Activated CD4-positive, alpha-beta T cell treated with anti-CD3 and anti-CD28 coated beads for 36 hours (primary cell): ENCODE measurements at regions of chr6 and their contacts with region 1.

Region 1: DNA sequence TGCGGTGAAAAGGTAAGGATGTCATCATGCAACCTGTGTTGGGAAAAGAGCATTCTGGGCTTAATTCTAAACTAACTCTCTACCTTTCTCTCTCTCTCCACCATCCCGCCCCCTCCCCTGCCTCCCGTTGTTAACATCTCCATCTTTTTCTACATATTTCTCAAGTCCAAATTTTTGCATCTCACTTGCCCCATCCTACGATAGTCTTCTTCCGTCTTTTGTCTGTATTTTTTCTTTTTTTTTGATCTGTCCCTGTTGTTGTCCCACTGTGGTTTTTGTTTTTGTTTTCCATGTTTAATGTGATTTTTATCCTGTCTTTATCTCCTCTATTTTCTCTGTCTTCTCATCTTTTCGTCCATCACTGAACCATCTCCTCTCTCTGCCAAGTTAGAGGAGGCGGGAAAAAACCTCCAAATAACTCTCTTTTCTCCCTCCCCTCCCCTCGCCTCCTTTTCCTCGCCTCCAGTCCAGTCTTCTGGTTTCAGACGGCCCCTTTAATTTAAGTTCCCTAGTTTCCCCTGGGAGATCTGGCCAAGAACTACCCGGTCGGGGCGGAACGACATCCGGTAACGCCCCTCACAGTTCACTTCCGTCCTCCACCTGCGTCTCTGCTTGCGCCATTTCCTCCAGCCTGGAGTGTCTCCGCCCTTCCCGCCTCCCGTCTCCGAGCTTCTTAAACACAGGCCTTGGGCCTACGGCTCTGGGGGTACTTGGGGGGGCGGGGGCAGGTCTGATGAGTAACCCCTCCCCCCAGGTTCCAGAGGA is at the start of gene NFKBIL1:
- DNase-seq: peak; percentile 95
- ATAC-seq: peak; percentile 77
- H3K4me3 Mint-ChIP-seq: peak within 1 kb of the TSS; percentile 89
- H3K27ac Mint-ChIP-seq: peak within 1 kb of the TSS; percentile 97
- H3K4me1 Mint-ChIP-seq: peaks cover 51% of the 10 kb centered on the region
- H3K27me3 Mint-ChIP-seq: no peaks in the 10 kb centered on the region
- total RNA-seq, gene NFKBIL1: 18.1 to 19.0 TPM

Region 2: DNA sequence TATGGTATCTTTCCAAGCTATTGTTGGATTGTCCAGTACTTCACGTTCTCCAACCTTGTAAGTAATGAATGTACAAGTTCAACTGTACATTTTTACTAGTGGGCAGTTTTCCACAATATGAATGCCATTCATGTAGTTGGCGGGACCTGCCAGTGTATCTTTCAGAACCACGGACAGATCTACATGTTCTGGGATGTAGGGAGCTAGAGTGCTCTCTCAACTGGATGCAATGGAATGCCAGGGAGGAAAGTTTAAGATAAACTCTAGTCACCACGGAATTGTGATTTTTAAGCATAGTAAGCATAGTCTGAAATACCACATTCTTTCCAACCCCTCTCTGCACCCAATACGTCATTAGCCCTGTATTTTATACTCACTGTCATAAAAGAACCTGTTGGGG is 253.8 kb before region 1 on chr6:
- CTCF ChIA-PET with region 1: no interaction called
- POLR2A ChIA-PET with region 1: no interaction called
- intact Hi-C with region 1: no loop called
- DNase-seq: no peak
- ATAC-seq: no peak
- H3K4me3 Mint-ChIP-seq: no peak overlapping the region
- H3K27ac Mint-ChIP-seq: no peak overlapping the region
- H3K4me1 Mint-ChIP-seq: no peaks in the 10 kb centered on the region
- H3K27me3 Mint-ChIP-seq: peaks cover 14% of the 10 kb centered on the region

Region 3: DNA sequence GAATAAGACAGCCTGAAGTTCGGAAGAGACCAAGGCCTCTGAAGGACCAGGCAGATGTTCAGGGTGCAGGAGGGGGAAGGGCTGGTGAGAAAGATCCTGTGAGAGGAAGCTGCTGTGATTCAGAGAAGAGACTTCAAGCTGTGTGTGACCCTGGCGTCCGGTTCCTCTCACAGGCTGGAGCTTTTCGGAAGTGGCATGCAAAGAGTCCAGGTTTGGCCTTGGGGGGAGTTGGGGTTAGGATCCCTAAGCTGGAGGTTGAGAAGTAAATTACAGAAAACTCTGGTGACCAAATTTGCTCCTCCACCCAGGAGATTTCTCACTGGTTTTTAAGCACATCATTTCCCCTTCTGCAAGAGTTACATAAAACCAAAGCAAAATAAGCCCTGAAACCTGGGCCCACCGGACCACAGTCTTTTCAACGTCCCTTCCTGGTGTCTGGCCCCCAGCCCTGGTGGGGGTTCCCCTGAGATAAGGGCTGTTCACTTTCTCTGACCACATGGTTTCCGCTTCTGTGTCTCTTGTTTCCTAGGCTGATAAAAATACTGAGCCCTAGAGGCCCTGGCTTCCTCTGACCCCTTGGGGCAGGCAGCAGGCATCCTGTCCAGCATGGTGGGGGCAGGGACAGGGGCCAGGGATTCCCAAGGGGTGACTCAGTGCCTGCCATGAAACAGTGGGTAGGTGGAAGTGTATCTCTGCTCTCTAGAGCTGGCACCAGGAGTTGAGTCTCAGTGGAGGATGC is 13.0 kb after region 1 on chr6:
- CTCF ChIA-PET with region 1: interaction called, 16 read pairs
- POLR2A ChIA-PET with region 1: interaction called, 8 read pairs
- intact Hi-C with region 1: no loop called
- DNase-seq: peak; percentile 80
- ATAC-seq: peak; percentile 72
- H3K4me3 Mint-ChIP-seq: peak overlapping the region; percentile 66
- H3K27ac Mint-ChIP-seq: peak overlapping the region; percentile 92
- H3K4me1 Mint-ChIP-seq: peaks cover 81% of the 10 kb centered on the region
- H3K27me3 Mint-ChIP-seq: peaks cover 3% of the 10 kb centered on the region

Region 4: GRCh38 chr6:31575335-31575901 is 28.3 kb after region 1 on chr6 and contains the start of gene TNF:
- CTCF ChIA-PET with region 1: interaction called, 278 read pairs
- POLR2A ChIA-PET with region 1: interaction called, 29 read pairs
- intact Hi-C with region 1: loop called (anchors 1 to 2 kb)
- DNase-seq: peak; percentile 89
- ATAC-seq: peak; percentile 23
- H3K4me3 Mint-ChIP-seq: peak within 1 kb of the TSS; percentile 97
- H3K27ac Mint-ChIP-seq: peak within 1 kb of the TSS; percentile 98
- H3K4me1 Mint-ChIP-seq: peaks cover 73% of the 10 kb centered on the region
- H3K27me3 Mint-ChIP-seq: no peaks in the 10 kb centered on the region
- total RNA-seq, gene TNF: 82.3 to 93.3 TPM

Region 5: DNA sequence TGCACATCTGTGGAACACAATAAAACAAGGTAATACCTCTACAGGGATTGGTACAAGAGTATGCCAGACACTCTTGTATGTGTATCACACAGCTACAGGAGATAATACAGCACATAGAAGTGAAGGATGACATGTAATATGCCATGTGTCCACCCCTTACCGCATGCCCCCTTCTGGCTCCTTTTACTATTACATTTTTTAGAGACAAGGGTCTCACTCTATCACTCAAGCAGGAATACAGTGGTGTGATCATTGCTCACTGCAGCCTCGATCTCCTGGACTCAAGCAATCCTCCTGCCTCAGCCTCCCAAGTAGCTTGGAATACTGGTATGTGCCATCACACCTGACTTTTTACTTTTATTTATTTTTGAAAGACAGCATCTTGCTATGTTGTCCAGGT is 49.9 kb after region 1 on chr6:
- CTCF ChIA-PET with region 1: interaction called, 658 read pairs
- POLR2A ChIA-PET with region 1: interaction called, 23 read pairs
- intact Hi-C with region 1: loop called (anchors 1 kb)
- DNase-seq: peak; percentile 61
- ATAC-seq: peak; percentile 78
- H3K4me3 Mint-ChIP-seq: no peak overlapping the region
- H3K27ac Mint-ChIP-seq: no peak overlapping the region
- H3K4me1 Mint-ChIP-seq: peaks cover 46% of the 10 kb centered on the region
- H3K27me3 Mint-ChIP-seq: no peaks in the 10 kb centered on the region

Region 6: DNA sequence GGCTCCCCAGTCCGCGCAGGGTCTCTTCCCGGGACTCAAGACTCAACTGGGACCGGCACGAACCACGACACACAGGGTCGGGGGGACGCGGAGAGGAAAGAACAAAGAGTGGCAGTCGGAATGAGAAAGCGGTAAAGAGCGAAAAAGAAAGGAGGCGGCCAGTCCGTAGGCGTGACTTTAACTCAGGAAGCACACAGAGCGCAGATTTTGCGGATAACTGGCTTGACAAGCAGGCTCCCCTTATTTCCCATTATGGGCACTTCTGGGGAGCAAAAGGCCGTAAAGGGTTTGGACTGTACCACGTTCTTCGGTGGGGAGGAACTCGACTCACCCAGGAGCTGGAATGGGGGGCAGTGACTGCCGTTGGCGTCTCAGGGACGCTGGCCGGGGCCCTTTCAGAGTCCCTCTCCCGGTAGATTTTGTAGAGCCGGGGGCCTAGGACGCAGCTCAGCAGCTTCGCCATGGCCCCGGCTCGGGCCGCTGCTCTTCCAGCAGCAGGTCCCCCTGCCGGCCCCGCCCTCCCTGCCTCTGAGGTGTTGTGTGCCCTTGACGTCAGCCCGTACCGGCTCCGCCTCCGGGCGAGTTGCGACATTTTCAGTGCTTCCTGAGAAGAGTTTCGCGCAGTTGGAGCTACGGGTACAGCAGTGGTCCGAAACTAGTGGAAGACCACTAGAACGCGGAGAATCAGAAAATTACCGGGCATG is 155.8 kb after region 1 on chr6 and contains the start of gene ABHD16A:
- CTCF ChIA-PET with region 1: no interaction called
- POLR2A ChIA-PET with region 1: no interaction called
- intact Hi-C with region 1: loop called in 1 of 2 experiments (anchors 1 kb)
- DNase-seq: peak; percentile 99
- ATAC-seq: peak; percentile 91
- H3K4me3 Mint-ChIP-seq: peak within 1 kb of the TSS; percentile 99
- H3K27ac Mint-ChIP-seq: peak within 1 kb of the TSS; percentile 97
- H3K4me1 Mint-ChIP-seq: peaks cover 24% of the 10 kb centered on the region
- H3K27me3 Mint-ChIP-seq: no peaks in the 10 kb centered on the region
- total RNA-seq, gene ABHD16A: 20.9 to 25.1 TPM

Region 7: DNA sequence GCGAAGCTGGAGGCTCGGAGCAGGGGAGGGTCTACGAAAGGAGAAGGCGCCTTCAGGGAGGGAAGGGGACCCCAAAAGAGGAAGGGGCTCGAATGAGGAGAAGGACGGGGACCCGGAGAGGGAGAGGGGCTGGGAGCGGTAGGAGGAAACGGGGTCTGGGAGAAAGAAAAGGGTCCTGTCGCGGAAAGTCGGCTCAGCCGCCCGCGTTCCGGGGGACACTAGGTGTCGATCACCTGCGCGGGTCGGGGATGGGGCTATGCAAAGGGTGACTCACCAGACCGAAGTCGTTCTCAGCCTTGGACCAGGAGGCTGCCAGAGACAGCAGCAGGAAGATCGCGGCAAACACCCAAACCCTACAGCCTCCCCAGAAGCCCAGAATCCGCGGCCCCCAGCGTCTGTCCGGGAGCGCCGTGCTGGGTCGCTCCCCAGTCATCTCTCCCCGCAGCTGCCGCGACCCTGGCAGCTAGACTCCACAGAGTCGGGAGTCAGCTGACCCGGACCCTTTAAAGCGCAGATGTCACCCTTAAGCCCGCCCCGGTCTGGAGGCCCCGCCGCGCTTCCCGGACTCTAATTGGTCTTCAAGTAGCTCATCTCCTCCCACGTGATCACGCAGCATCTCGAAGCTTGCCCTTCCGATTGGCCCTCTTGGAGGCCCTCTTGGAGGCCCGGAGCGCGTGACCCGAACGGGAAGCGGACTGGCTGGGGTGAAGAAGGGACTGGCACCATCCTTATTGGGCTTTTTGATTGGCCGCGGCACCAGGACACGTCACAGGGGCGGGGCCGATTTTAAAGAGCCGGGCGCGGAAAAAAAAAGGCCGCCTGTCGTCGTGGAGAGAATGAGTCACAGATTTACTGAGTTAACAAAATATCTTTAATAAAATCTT is 315.4 kb after region 1 on chr6 and contains the start of gene NEU1:
- CTCF ChIA-PET with region 1: interaction called, 3 read pairs
- POLR2A ChIA-PET with region 1: no interaction called
- intact Hi-C with region 1: loop called in 1 of 2 experiments (anchors 1 kb)
- DNase-seq: peak; percentile 100
- ATAC-seq: peak; percentile 98
- H3K4me3 Mint-ChIP-seq: peak within 1 kb of the TSS; percentile 90
- H3K27ac Mint-ChIP-seq: peak within 1 kb of the TSS; percentile 91
- H3K4me1 Mint-ChIP-seq: peaks cover 27% of the 10 kb centered on the region
- H3K27me3 Mint-ChIP-seq: no peaks in the 10 kb centered on the region
- total RNA-seq, gene NEU1: 11.6 to 11.8 TPM

Region 8: DNA sequence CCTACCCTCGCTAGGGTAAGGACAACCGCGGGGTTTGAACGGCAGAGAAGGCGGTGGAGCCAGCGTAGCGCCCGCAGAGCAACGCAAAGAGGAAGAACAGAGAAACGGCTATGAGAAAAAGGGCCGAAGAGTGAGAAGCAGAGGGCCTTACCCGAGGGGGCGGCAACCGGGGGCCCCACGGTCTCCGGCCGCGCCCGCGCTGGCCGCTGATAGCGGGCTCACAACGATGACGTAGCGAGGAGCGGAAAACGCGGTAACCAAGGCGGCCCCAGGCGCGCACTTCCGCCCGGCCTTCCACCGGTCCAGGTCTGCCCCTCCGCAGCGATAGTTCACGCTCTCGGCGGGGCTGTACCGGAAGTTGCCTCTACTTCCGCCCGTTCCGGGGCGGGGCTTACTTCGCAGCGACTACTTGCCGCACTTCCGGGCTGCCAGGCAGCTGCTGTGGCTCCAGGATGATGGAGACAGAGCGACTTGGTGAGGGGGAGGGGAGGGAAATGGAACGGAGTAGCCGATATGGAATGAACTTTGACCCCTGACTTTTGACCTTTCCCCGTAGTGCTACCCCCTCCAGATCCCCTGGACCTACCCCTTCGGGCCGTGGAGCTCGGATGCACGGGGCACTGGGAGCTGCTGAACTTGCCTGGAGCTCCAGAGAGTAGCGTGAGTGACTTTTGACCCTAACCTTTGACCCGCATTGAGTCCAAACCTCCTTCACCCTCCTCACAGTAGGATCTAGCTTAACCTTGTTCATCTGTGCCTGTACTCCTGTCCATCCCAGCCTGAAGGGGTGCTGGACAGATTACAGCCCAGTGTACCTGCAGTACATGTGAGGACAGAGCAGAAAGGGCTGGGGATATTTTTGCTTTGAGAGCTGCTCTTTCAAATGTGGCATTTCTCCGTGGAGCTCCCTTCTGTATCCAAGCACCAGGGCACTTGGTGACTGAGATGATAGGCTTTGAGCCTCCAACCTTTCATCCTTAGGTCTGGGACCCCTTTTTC is 411.9 kb after region 1 on chr6 and contains the starts of genes NELFE and SKIC2:
- CTCF ChIA-PET with region 1: no interaction called
- POLR2A ChIA-PET with region 1: interaction called, 5 read pairs
- intact Hi-C with region 1: loop called in 1 of 2 experiments (anchors 1 kb)
- DNase-seq: peak; percentile 99
- ATAC-seq: peak; percentile 99
- H3K4me3 Mint-ChIP-seq: peak within 1 kb of the TSS; percentile 95
- H3K27ac Mint-ChIP-seq: peak within 1 kb of the TSS; percentile 98
- H3K4me1 Mint-ChIP-seq: peaks cover 34% of the 10 kb centered on the region
- H3K27me3 Mint-ChIP-seq: no peaks in the 10 kb centered on the region
- total RNA-seq, gene NELFE: 74.3 to 95.1 TPM
- total RNA-seq, gene SKIC2: 90.2 to 104 TPM

Region 9: GRCh38 chr6:32337186-32337805 is 790.2 kb after region 1 on chr6:
- CTCF ChIA-PET with region 1: no interaction called
- POLR2A ChIA-PET with region 1: no interaction called
- intact Hi-C with region 1: no loop called
- DNase-seq: no peak
- ATAC-seq: no peak
- H3K4me3 Mint-ChIP-seq: no peak overlapping the region
- H3K27ac Mint-ChIP-seq: no peak overlapping the region
- H3K4me1 Mint-ChIP-seq: no peaks in the 10 kb centered on the region
- H3K27me3 Mint-ChIP-seq: peaks cover 4% of the 10 kb centered on the region